Activated CD4-positive, alpha-beta memory T cell treated with anti-CD3 and anti-CD28 coated beads for 36 hours (primary cell): ENCODE measurements at regions of chr10 and their contacts with region 1.

Region 1: GRCh38 chr10:88754287-88754686 is 5.5 kb upstream of the LIPN start:
- DNase-seq: no peak
- H3K4me3 Mint-ChIP-seq: no peak overlapping the region
- H3K27ac Mint-ChIP-seq: no peak overlapping the region
- H3K4me1 Mint-ChIP-seq: peaks cover 6% of the 10 kb centered on the region
- H3K27me3 Mint-ChIP-seq: peaks cover 6% of the 10 kb centered on the region

Region 2: DNA sequence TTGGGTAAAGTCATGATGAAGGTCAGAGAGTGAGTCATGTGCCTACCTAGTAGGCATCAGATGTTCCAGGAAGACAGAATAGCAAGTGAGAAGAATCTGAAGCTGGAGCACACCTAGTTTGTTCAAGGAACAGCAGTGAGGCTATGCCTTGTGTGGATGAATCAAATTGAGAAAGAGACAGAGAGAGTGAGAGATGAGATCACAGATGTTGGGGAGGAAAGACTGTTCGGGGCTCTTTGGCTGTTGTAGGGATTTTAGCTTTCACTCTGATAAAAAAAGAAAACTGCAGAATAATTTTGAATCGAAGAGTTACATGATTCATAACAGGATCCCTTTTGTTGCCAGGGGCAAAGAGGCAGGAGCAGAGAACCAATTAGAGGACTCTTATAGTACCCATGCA is 83.8 kb before region 1 on chr10:
- CTCF ChIA-PET with region 1: no interaction called
- POLR2A ChIA-PET with region 1: interaction called, 3 read pairs
- intact Hi-C with region 1: loop called (anchors 1 kb)
- DNase-seq: peak; percentile 33
- H3K4me3 Mint-ChIP-seq: no peak overlapping the region
- H3K27ac Mint-ChIP-seq: peak overlapping the region; percentile 21
- H3K4me1 Mint-ChIP-seq: peaks cover 18% of the 10 kb centered on the region
- H3K27me3 Mint-ChIP-seq: peaks cover 7% of the 10 kb centered on the region

Region 3: GRCh38 chr10:88707429-88708285 is 46.6 kb before region 1 on chr10:
- CTCF ChIA-PET with region 1: no interaction called
- POLR2A ChIA-PET with region 1: no interaction called
- intact Hi-C with region 1: loop called (anchors 1 kb)
- DNase-seq: no peak
- H3K4me3 Mint-ChIP-seq: no peak overlapping the region
- H3K27ac Mint-ChIP-seq: no peak overlapping the region
- H3K4me1 Mint-ChIP-seq: peaks cover 14% of the 10 kb centered on the region
- H3K27me3 Mint-ChIP-seq: peaks cover 4% of the 10 kb centered on the region

Region 4: GRCh38 chr10:88728107-88728763 is 26.1 kb before region 1 on chr10:
- CTCF ChIA-PET with region 1: interaction called, 5 read pairs
- POLR2A ChIA-PET with region 1: no interaction called
- intact Hi-C with region 1: loop called (anchors 2 kb)
- DNase-seq: peak; percentile 76
- H3K4me3 Mint-ChIP-seq: no peak overlapping the region
- H3K27ac Mint-ChIP-seq: no peak overlapping the region
- H3K4me1 Mint-ChIP-seq: no peaks in the 10 kb centered on the region
- H3K27me3 Mint-ChIP-seq: peaks cover 1% of the 10 kb centered on the region

Region 5: DNA sequence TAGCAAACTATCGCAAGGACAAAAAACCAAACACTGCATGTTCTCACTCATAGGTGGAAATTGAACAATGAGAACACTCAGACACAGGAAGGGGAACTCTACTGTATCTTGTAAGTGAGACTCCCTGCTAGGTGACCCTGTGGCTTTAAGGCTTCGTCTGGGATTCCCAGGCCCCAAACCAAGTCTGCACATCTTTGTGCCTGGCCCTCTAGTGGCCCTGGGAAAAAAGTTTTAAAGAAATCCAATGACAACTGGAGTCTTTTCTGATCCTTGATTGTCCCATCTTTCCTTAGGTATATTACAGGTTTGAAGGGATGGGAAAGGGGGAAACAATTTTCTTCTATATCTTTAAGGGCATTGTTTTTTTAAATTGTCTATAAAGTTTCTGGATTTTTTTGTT is 37.6 kb after region 1 on chr10:
- CTCF ChIA-PET with region 1: no interaction called
- POLR2A ChIA-PET with region 1: interaction called, 3 read pairs
- intact Hi-C with region 1: loop called (anchors 2 kb)
- DNase-seq: peak; percentile 15
- H3K4me3 Mint-ChIP-seq: no peak overlapping the region
- H3K27ac Mint-ChIP-seq: no peak overlapping the region
- H3K4me1 Mint-ChIP-seq: peaks cover 18% of the 10 kb centered on the region
- H3K27me3 Mint-ChIP-seq: peaks cover 7% of the 10 kb centered on the region

Region 6: GRCh38 chr10:88820748-88821389 is 66.6 kb after region 1 on chr10:
- CTCF ChIA-PET with region 1: no interaction called
- POLR2A ChIA-PET with region 1: no interaction called
- intact Hi-C with region 1: loop called (anchors 2 kb)
- DNase-seq: no peak
- H3K4me3 Mint-ChIP-seq: no peak overlapping the region
- H3K27ac Mint-ChIP-seq: no peak overlapping the region
- H3K4me1 Mint-ChIP-seq: peaks cover 20% of the 10 kb centered on the region
- H3K27me3 Mint-ChIP-seq: no peaks in the 10 kb centered on the region